Activated CD4-positive, alpha-beta T cell treated with anti-CD3 and anti-CD28 coated beads for 36 hours (primary cell): ENCODE measurements at regions of chr11 and their contacts with region 1.

Region 1: DNA sequence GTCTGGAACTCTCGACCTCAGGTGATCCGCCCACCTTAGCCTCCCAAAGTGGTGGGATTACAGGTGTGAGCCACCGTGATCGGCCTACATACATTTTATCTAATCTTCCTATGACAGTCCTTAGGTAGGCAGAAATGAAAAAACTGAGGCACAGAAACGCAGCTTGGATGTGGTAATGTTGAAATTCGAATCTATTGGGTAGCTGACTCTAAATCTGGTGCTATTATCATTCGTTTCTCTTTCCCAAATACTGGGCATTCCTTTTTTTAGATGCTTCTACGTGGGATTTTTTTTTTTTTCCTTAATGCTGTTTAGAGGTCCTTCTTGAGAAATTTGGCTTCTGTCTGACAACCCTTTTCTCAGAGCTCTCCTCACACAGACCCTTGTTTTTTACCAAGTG is 41.5 kb downstream of the FCHSD2 start:
- DNase-seq: no peak
- ATAC-seq: no peak
- H3K4me3 Mint-ChIP-seq: no peak overlapping the region
- H3K27ac Mint-ChIP-seq: no peak overlapping the region
- H3K4me1 Mint-ChIP-seq: peaks cover 7% of the 10 kb centered on the region
- H3K27me3 Mint-ChIP-seq: no peaks in the 10 kb centered on the region

Region 2: GRCh38 chr11:73295231-73295995 is 194.8 kb after region 1 on chr11:
- CTCF ChIA-PET with region 1: no interaction called
- POLR2A ChIA-PET with region 1: interaction called, 11 read pairs
- intact Hi-C with region 1: no loop called
- DNase-seq: peak; percentile 89
- ATAC-seq: peak; percentile 97
- H3K4me3 Mint-ChIP-seq: no peak overlapping the region
- H3K27ac Mint-ChIP-seq: no peak overlapping the region
- H3K4me1 Mint-ChIP-seq: peaks cover 2% of the 10 kb centered on the region
- H3K27me3 Mint-ChIP-seq: peaks cover 1% of the 10 kb centered on the region

Region 3: GRCh38 chr11:73585834-73586575 is 485.4 kb after region 1 on chr11:
- CTCF ChIA-PET with region 1: no interaction called
- POLR2A ChIA-PET with region 1: no interaction called
- intact Hi-C with region 1: no loop called
- DNase-seq: no peak
- ATAC-seq: no peak
- H3K4me3 Mint-ChIP-seq: no peak overlapping the region
- H3K27ac Mint-ChIP-seq: no peak overlapping the region
- H3K4me1 Mint-ChIP-seq: peaks cover 8% of the 10 kb centered on the region
- H3K27me3 Mint-ChIP-seq: no peaks in the 10 kb centered on the region